MCF 10A (cell line): ENCODE measurements at regions of chr7 and their contacts with region 1.

Region 1: DNA sequence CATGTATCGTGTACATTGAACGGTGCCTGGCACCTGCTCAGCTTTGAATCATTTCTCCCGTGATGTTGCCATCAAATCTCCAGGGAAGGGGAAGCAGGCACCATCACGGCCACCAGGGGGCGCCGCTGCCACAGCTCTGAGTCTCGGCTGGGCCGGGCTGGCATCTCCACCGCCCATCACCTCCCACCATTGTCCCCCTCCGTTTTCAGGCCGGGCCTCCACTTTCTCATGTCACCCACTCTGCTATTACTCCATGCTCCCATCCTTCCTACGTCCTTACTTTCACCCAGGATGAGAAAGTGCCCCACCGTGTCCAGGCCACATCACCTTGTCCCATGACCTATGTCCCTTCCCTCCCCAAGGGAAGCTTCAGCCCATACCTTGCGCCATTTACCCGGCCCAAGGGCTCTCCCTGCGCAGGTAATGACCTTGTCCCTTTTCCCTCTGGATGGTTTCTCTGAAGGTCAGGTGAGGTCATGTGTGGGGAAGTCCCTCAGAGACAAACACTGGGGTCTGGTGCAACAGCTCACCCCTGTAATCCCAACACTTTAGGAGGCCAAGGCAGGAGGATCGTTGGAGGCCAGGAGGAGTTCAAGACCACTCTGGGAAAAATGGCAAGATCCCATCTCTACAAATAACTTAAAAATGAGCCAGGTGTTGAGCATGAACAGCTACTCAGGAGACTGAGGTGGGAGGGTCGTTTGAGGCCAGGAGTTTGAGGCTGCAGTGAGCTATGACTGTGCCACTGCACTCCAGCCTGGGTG is 31.8 kb upstream of the OCM2 start:
- DNase-seq: peak; percentile 79
- H3K4me3 Mint-ChIP-seq: no peak overlapping the region
- H3K27ac Mint-ChIP-seq: no peak overlapping the region
- H3K4me1 Mint-ChIP-seq: no peaks in the 10 kb centered on the region
- H3K27me3 Mint-ChIP-seq: no peaks in the 10 kb centered on the region
- CTCF ChIP-seq: peak; percentile 93

Region 2: GRCh38 chr7:97174303-97174702 is 847.5 kb before region 1 on chr7:
- CTCF ChIA-PET with region 1: no interaction called
- POLR2A ChIA-PET with region 1: no interaction called
- intact Hi-C with region 1: no loop called
- DNase-seq: no peak
- H3K4me3 Mint-ChIP-seq: no peak overlapping the region
- H3K27ac Mint-ChIP-seq: peak overlapping the region; percentile 16
- H3K4me1 Mint-ChIP-seq: peaks cover 8% of the 10 kb centered on the region
- H3K27me3 Mint-ChIP-seq: no peaks in the 10 kb centered on the region
- CTCF ChIP-seq: no peak

Region 3: DNA sequence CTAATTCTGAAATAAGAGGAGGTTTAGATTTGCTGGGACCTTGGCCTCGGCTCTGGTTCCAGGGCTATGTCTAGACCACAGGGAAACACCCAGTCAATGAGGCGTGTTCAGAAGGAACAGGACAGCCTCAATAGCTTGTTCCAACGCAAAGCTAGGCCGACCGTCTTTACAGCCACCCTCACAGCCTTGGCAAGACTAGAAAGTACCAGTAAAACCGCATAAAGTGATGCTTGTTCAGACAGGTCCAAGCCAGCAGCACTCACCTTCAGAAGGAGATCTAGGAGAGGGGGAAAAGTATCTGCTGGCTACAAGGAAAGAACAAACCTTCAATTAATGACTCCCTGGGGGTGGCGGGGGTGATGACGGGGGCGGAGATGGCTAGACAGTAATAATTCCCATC is 34.8 kb after region 1 on chr7:
- CTCF ChIA-PET with region 1: interaction called, 15 read pairs
- POLR2A ChIA-PET with region 1: interaction called, 3 read pairs
- intact Hi-C with region 1: no loop called
- DNase-seq: peak; percentile 79
- H3K4me3 Mint-ChIP-seq: peak overlapping the region; percentile 53
- H3K27ac Mint-ChIP-seq: peak overlapping the region; percentile 87
- H3K4me1 Mint-ChIP-seq: peaks cover 36% of the 10 kb centered on the region
- H3K27me3 Mint-ChIP-seq: no peaks in the 10 kb centered on the region
- CTCF ChIP-seq: no peak

Region 4: GRCh38 chr7:98106647-98107445 is 85.1 kb after region 1 on chr7 and contains the start of gene LMTK2:
- CTCF ChIA-PET with region 1: interaction called, 41 read pairs
- POLR2A ChIA-PET with region 1: interaction called, 3 read pairs
- intact Hi-C with region 1: loop called (anchors 1 kb)
- DNase-seq: peak; percentile 93
- H3K4me3 Mint-ChIP-seq: peak within 1 kb of the TSS; percentile 90
- H3K27ac Mint-ChIP-seq: peak within 1 kb of the TSS; percentile 79
- H3K4me1 Mint-ChIP-seq: peaks cover 12% of the 10 kb centered on the region
- H3K27me3 Mint-ChIP-seq: no peaks in the 10 kb centered on the region
- CTCF ChIP-seq: peak; percentile 84
- total RNA-seq, gene LMTK2: 16.8 and 21.6 TPM in 2 replicates

Region 5: DNA sequence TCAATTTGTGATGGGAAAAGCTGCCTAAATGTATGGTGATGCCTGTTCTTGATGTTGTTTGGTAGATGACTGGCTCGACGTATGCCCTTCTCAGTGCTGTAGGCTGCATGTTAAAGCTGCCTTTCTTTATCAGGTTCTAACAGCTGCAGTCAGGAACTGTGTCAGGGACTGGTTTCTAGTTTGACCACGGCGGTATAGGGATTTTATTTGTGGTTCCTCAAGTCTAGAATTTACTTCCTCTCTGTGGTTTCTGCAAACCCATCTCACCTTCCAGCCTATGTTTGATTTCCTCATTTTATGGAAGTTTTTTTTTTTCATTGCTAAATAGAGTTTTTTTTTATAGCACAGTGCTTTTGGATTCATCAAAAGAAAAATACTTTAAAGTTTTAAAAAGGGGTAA is 111.4 kb after region 1 on chr7:
- CTCF ChIA-PET with region 1: interaction called, 29 read pairs
- POLR2A ChIA-PET with region 1: interaction called, 3 read pairs
- intact Hi-C with region 1: no loop called
- DNase-seq: no peak
- H3K4me3 Mint-ChIP-seq: peak overlapping the region; percentile 33
- H3K27ac Mint-ChIP-seq: peak overlapping the region; percentile 91
- H3K4me1 Mint-ChIP-seq: peaks cover 35% of the 10 kb centered on the region
- H3K27me3 Mint-ChIP-seq: no peaks in the 10 kb centered on the region
- CTCF ChIP-seq: no peak

Region 6: DNA sequence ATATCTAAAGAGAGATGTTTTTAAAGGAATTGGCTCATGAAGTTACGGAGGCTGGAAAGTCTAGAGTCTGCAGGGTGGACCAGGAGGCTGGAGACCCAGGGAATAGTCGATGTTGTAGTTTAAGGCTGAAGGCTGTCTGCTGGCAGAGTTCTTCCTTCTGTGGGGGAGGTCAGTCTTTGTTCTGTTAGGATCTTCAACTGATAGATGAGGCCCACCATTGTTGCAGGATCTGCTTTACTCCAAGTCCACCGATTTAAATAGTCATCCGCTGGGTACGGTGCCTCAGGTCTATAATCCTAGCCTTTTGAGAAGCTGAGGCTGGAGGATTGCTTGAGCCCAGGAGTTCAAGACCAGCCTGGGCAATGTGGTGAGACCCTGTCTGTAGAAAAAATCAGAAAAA is 134.9 kb after region 1 on chr7:
- CTCF ChIA-PET with region 1: interaction called, 739 read pairs
- POLR2A ChIA-PET with region 1: interaction called, 4 read pairs
- intact Hi-C with region 1: no loop called
- DNase-seq: no peak
- H3K4me3 Mint-ChIP-seq: no peak overlapping the region
- H3K27ac Mint-ChIP-seq: no peak overlapping the region
- H3K4me1 Mint-ChIP-seq: no peaks in the 10 kb centered on the region
- H3K27me3 Mint-ChIP-seq: no peaks in the 10 kb centered on the region
- CTCF ChIP-seq: no peak

Region 7: GRCh38 chr7:98229441-98229840 is 207.7 kb after region 1 on chr7:
- CTCF ChIA-PET with region 1: no interaction called
- POLR2A ChIA-PET with region 1: no interaction called
- intact Hi-C with region 1: no loop called
- DNase-seq: no peak
- H3K4me3 Mint-ChIP-seq: no peak overlapping the region
- H3K27ac Mint-ChIP-seq: no peak overlapping the region
- H3K4me1 Mint-ChIP-seq: no peaks in the 10 kb centered on the region
- H3K27me3 Mint-ChIP-seq: no peaks in the 10 kb centered on the region
- CTCF ChIP-seq: no peak

Region 8: DNA sequence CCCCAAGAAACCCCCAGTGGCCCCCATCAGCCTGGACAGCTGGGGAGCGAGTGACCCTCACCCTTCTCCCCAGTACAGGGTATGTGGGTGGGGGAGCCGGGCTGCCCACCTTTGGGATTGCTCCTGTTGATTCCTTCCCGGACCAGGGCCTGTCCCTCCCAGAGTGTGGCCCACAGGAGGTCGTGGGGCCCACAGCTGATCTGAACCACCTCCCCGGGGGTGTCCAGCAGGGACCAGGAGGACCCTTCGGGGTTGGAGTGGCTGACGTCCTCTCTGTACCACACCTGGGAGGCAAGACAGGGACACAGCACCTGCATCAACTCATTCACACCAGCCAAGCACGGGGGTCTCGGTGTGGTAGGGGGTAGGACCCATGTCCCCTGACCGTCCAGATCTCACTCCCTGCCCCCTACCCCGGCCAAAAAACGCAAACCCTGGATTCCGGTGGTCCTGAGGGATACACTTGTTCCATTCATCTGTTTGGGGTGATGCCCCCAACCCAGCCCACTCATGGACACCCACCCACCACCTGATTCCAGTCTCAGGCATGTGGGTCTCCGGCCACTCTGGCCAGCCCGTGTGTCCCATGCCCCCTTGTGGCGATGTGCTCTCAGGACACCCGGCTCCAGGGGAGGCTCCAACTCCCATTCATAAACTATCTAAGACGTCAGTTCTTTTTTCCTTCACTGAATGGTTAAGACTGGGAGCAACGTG is 219.3 kb after region 1 on chr7:
- CTCF ChIA-PET with region 1: interaction called, 3 read pairs
- POLR2A ChIA-PET with region 1: no interaction called
- intact Hi-C with region 1: loop called (anchors 1 kb)
- DNase-seq: peak; percentile 49
- H3K4me3 Mint-ChIP-seq: no peak overlapping the region
- H3K27ac Mint-ChIP-seq: no peak overlapping the region
- H3K4me1 Mint-ChIP-seq: no peaks in the 10 kb centered on the region
- H3K27me3 Mint-ChIP-seq: no peaks in the 10 kb centered on the region
- CTCF ChIP-seq: peak; percentile 50